ENCODE measurements at regions of chr17 and their contacts with region 1.

Region 1: GRCh38 chr17:4074831-4075495 is 67.9 kb downstream of the ZZEF1 start:
- DNase-seq: peak; percentile 16 to 50
- H3K4me3 ChIP-seq: no peak overlapping the region
- H3K27ac ChIP-seq: no peak overlapping the region
- H3K4me1 ChIP-seq: peaks cover 13% of the 10 kb centered on the region
- H3K27me3 ChIP-seq: no peaks in the 10 kb centered on the region
- CTCF ChIP-seq: peak; percentile 85

Region 2: DNA sequence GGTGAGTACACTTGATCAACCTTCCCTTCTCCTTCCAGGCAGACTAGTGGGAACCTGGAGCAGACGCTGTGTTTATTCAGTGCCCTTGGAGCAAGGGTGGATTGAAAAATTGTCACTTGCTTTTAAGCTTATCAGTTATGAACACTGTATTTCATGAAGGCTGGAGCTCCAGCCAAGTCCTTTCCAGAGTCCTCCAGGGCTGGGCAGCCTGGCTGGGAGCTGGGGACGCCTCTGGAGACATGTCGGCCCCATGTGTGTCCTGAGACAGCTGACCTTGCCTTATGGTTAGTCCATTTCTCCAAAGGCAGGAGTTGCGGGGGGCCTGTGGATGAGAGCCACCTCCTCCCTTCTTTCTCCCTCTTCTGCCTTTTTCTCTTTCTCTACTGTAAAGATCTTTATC is 1211.8 kb before region 1 on chr17:
- CTCF ChIA-PET with region 1: interaction called, 17 read pairs
- POLR2A ChIA-PET with region 1: no interaction called
- intact Hi-C with region 1: no loop called
- DNase-seq: no peak
- H3K4me3 ChIP-seq: no peak overlapping the region
- H3K27ac ChIP-seq: no peak overlapping the region
- H3K4me1 ChIP-seq: peaks cover 10% of the 10 kb centered on the region; the same call in 1 of the 2 replicates
- H3K27me3 ChIP-seq: no peaks in the 10 kb centered on the region
- CTCF ChIP-seq: no peak

Region 3: GRCh38 chr17:3859940-3860339 is 215.0 kb before region 1 on chr17:
- CTCF ChIA-PET with region 1: no interaction called
- POLR2A ChIA-PET with region 1: no interaction called
- intact Hi-C with region 1: loop called (anchors 2 kb)
- DNase-seq: no peak
- H3K4me3 ChIP-seq: no peak overlapping the region
- H3K27ac ChIP-seq: no peak overlapping the region
- H3K4me1 ChIP-seq: no peaks in the 10 kb centered on the region
- H3K27me3 ChIP-seq: no peaks in the 10 kb centered on the region
- CTCF ChIP-seq: no peak

Region 4: GRCh38 chr17:3913531-3914311 is 161.2 kb before region 1 on chr17:
- CTCF ChIA-PET with region 1: interaction called, 3 read pairs
- POLR2A ChIA-PET with region 1: no interaction called
- intact Hi-C with region 1: loop called (anchors 5 kb)
- DNase-seq: peak in 1 of 2 experiments; percentile 83
- H3K4me3 ChIP-seq: no peak overlapping the region
- H3K27ac ChIP-seq: no peak overlapping the region
- H3K4me1 ChIP-seq: no peaks in the 10 kb centered on the region
- H3K27me3 ChIP-seq: no peaks in the 10 kb centered on the region; the same call in 1 of the 2 replicates
- CTCF ChIP-seq: peak; percentile 98

Region 5: GRCh38 chr17:4143563-4144421 is 68.8 kb after region 1 on chr17:
- CTCF ChIA-PET with region 1: no interaction called
- POLR2A ChIA-PET with region 1: no interaction called
- intact Hi-C with region 1: no loop called
- DNase-seq: peak; percentile 81 to 86
- H3K4me3 ChIP-seq: peak overlapping the region; percentile 89
- H3K27ac ChIP-seq: peak overlapping the region; percentile 98
- H3K4me1 ChIP-seq: peaks cover 14% of the 10 kb centered on the region
- H3K27me3 ChIP-seq: no peaks in the 10 kb centered on the region
- CTCF ChIP-seq: no peak

Measured in PC-9 (cell line).